ENCODE measurements at regions of chr1 and their contacts with region 1.

Region 1: GRCh38 chr1:240611619-240612480 is at the start of gene GREM2:
- DNase-seq: peak; percentile 72
- H3K4me3 Mint-ChIP-seq: peak within 1 kb of the TSS; percentile 86
- H3K27ac Mint-ChIP-seq: peak within 1 kb of the TSS; percentile 59
- H3K4me1 Mint-ChIP-seq: peaks cover 15% of the 10 kb centered on the region
- H3K27me3 Mint-ChIP-seq: no peaks in the 10 kb centered on the region
- CTCF ChIP-seq: no peak
- total RNA-seq, gene GREM2: 0.10 TPM in 1 of 2 replicates, not detected in the other

Region 2: DNA sequence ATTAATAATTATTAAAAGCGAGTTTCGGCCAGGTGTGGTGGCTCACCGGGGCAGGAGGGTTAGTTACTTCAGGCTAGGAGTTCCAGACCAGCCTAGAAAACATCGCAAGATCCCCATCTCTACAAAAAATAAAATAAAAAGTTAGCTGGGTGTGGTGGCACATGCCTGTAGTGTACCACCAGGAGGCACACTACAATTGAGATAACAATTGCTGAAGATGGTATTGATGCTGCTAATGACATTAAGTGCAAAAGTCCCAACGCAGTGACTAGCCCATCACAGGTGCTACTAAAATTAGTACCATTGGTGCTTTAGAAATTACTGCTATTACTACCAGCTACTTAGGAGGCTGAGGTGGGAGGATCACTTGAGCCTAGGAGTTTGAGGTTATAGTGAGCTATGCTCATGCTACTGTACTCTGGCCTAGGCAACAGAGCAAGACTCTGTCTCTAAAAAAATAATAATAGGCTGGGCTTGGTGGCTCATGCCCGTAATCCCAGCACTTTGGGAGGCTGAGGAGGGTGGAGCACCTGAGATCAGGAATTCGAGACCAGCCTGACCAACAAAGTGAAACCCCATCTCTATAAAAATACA is 156.5 kb before region 1 on chr1:
- CTCF ChIA-PET with region 1: interaction called, 23 read pairs
- POLR2A ChIA-PET with region 1: interaction called, 3 read pairs
- intact Hi-C with region 1: no loop called
- DNase-seq: peak; percentile 65
- H3K4me3 Mint-ChIP-seq: no peak overlapping the region
- H3K27ac Mint-ChIP-seq: no peak overlapping the region
- H3K4me1 Mint-ChIP-seq: no peaks in the 10 kb centered on the region
- H3K27me3 Mint-ChIP-seq: no peaks in the 10 kb centered on the region
- CTCF ChIP-seq: peak; percentile 38

Region 3: GRCh38 chr1:240572328-240572727 is 39.5 kb before region 1 on chr1:
- CTCF ChIA-PET with region 1: interaction called, 17 read pairs
- POLR2A ChIA-PET with region 1: no interaction called
- intact Hi-C with region 1: no loop called
- DNase-seq: no peak
- H3K4me3 Mint-ChIP-seq: no peak overlapping the region
- H3K27ac Mint-ChIP-seq: no peak overlapping the region
- H3K4me1 Mint-ChIP-seq: peaks cover 8% of the 10 kb centered on the region
- H3K27me3 Mint-ChIP-seq: no peaks in the 10 kb centered on the region
- CTCF ChIP-seq: no peak

Region 4: GRCh38 chr1:240587791-240588190 is 24.1 kb before region 1 on chr1:
- CTCF ChIA-PET with region 1: interaction called, 74 read pairs
- POLR2A ChIA-PET with region 1: interaction called, 3 read pairs
- intact Hi-C with region 1: no loop called
- DNase-seq: no peak
- H3K4me3 Mint-ChIP-seq: no peak overlapping the region
- H3K27ac Mint-ChIP-seq: no peak overlapping the region
- H3K4me1 Mint-ChIP-seq: peaks cover 4% of the 10 kb centered on the region
- H3K27me3 Mint-ChIP-seq: no peaks in the 10 kb centered on the region
- CTCF ChIP-seq: no peak

Region 5: DNA sequence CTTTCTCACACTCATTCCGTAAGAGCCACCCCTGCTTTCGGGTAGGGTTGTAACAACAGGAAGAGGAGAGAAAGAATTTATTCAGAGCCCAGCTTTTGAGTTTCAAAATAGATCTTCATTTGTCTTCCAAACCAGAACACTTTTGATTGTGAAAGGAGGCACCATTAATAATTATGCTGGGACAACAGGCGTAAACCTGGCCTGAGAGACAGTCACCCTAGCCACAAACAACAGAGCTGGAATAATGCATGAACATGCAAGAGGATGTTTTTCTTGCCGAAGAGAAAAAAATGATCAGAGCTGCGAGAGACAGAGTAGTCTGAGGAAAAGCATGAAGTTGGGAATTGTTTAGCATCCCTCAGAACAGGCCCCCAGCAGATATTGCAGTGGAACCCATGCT is 18.6 kb after region 1 on chr1:
- CTCF ChIA-PET with region 1: interaction called, 11 read pairs
- POLR2A ChIA-PET with region 1: interaction called, 3 read pairs
- intact Hi-C with region 1: no loop called
- DNase-seq: no peak
- H3K4me3 Mint-ChIP-seq: no peak overlapping the region
- H3K27ac Mint-ChIP-seq: no peak overlapping the region
- H3K4me1 Mint-ChIP-seq: no peaks in the 10 kb centered on the region
- H3K27me3 Mint-ChIP-seq: no peaks in the 10 kb centered on the region
- CTCF ChIP-seq: no peak

Region 6: GRCh38 chr1:240635466-240636256 is 23.8 kb after region 1 on chr1:
- CTCF ChIA-PET with region 1: interaction called, 11 read pairs
- POLR2A ChIA-PET with region 1: interaction called, 4 read pairs
- intact Hi-C with region 1: no loop called
- DNase-seq: no peak
- H3K4me3 Mint-ChIP-seq: no peak overlapping the region
- H3K27ac Mint-ChIP-seq: no peak overlapping the region
- H3K4me1 Mint-ChIP-seq: no peaks in the 10 kb centered on the region
- H3K27me3 Mint-ChIP-seq: no peaks in the 10 kb centered on the region
- CTCF ChIP-seq: no peak

Region 7: DNA sequence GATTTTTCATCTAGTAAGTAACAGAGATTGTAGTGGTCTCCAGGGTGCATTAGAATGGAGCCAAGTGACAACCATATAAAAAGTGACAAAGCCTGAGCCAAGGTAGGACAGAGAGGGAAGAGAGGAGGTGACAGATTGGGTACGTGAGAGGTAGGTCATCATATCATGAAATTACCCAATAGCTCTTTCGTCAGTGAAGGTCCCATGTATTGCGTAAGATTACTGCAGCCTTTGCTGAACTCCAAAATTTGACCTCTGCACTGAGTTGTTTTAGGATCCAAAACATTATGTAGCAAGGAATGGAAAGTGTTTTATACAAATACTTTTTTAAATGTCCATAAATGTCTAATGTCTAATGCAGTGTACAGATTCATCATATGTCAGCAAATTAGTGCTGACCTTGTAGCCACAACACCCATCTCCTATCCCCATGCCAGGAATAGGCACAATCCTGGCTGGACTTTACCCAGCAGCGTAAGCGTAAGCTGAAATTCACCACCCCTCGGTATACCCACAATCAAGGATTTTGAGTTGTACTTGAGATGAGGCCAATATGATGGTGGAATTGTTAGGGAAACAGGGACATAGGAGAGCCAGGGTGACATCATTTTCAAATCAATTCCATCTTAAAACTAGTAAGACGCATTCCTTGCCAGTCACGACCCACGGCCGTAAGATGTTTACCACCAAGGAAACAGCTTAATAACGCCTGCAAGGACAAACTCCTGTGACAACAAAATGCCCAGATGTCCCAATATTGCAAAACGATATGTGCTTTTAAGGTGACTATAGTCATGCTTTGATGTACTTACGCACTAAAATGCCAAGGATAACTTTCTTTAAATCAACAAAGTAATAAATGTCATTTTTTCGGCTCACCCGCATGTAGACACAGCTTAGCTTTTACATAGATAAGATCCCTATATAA is 38.1 kb after region 1 on chr1:
- CTCF ChIA-PET with region 1: interaction called, 16 read pairs
- POLR2A ChIA-PET with region 1: no interaction called
- intact Hi-C with region 1: no loop called
- DNase-seq: peak; percentile 40
- H3K4me3 Mint-ChIP-seq: no peak overlapping the region
- H3K27ac Mint-ChIP-seq: no peak overlapping the region
- H3K4me1 Mint-ChIP-seq: peaks cover 4% of the 10 kb centered on the region
- H3K27me3 Mint-ChIP-seq: no peaks in the 10 kb centered on the region
- CTCF ChIP-seq: no peak

Measured in MCF 10A (cell line).